Activated CD4-positive, alpha-beta T cell treated with anti-CD3 and anti-CD28 coated beads, Interleukin-2, amount 10 ng/mL, durations not matched to agents 24 days and 14 days (primary cell): ENCODE measurements at regions of chr6 and their contacts with region 1.

Region 1: GRCh38 chr6:11585426-11586016 is 48.0 kb downstream of the TMEM170B start:
- DNase-seq: peak; percentile 66
- H3K4me3 Mint-ChIP-seq: no peak overlapping the region
- H3K27ac Mint-ChIP-seq: no peak overlapping the region
- H3K4me1 Mint-ChIP-seq: no peaks in the 10 kb centered on the region
- H3K27me3 Mint-ChIP-seq: peaks cover 13% of the 10 kb centered on the region

Region 2: GRCh38 chr6:11632795-11633511 is 47.4 kb after region 1 on chr6:
- intact Hi-C with region 1: no loop called
- DNase-seq: no peak
- H3K4me3 Mint-ChIP-seq: no peak overlapping the region
- H3K27ac Mint-ChIP-seq: no peak overlapping the region
- H3K4me1 Mint-ChIP-seq: no peaks in the 10 kb centered on the region
- H3K27me3 Mint-ChIP-seq: peaks cover under 1% of the 10 kb centered on the region

Region 3: GRCh38 chr6:12011276-12012076 is 426.0 kb after region 1 on chr6:
- intact Hi-C with region 1: no loop called
- DNase-seq: peak; percentile 97
- H3K4me3 Mint-ChIP-seq: peak overlapping the region; percentile 96
- H3K27ac Mint-ChIP-seq: peak overlapping the region; percentile 99
- H3K4me1 Mint-ChIP-seq: peaks cover 46% of the 10 kb centered on the region
- H3K27me3 Mint-ChIP-seq: no peaks in the 10 kb centered on the region

Region 4: DNA sequence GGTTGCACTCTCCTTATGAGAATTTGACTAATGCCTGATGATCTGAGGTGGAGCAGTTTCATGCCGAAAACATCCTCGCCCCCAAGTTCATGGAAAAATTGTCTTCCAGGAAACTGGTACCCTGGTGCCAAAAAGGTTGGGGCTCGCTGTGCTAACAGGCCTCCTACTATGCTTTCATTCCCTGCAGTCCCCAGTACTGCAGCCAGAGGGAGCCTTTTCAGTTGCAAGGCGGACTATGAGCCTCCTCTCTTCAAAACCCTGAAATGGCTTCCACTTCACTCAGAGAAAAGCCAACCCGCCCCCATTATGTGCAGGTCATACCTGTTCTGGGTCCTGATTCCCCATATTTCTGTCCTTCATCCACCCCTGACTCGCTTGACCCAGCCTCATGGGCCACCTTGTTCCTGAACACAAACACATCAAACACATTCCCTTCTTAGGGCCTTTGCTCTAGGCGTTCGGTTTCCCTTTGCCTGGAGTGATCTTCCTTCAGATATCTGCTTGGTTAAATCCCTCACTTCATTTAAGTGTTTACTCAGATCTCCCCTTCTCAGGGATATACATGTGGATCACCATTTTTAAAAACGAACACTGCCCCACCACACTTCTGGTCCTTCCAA is 1304.8 kb after region 1 on chr6:
- intact Hi-C with region 1: loop called (anchors 5 kb)
- DNase-seq: peak; percentile 71
- H3K4me3 Mint-ChIP-seq: no peak overlapping the region
- H3K27ac Mint-ChIP-seq: no peak overlapping the region
- H3K4me1 Mint-ChIP-seq: no peaks in the 10 kb centered on the region
- H3K27me3 Mint-ChIP-seq: peaks cover 5% of the 10 kb centered on the region